ENCODE measurements at regions of chr14 and their contacts with region 1.

Region 1: DNA sequence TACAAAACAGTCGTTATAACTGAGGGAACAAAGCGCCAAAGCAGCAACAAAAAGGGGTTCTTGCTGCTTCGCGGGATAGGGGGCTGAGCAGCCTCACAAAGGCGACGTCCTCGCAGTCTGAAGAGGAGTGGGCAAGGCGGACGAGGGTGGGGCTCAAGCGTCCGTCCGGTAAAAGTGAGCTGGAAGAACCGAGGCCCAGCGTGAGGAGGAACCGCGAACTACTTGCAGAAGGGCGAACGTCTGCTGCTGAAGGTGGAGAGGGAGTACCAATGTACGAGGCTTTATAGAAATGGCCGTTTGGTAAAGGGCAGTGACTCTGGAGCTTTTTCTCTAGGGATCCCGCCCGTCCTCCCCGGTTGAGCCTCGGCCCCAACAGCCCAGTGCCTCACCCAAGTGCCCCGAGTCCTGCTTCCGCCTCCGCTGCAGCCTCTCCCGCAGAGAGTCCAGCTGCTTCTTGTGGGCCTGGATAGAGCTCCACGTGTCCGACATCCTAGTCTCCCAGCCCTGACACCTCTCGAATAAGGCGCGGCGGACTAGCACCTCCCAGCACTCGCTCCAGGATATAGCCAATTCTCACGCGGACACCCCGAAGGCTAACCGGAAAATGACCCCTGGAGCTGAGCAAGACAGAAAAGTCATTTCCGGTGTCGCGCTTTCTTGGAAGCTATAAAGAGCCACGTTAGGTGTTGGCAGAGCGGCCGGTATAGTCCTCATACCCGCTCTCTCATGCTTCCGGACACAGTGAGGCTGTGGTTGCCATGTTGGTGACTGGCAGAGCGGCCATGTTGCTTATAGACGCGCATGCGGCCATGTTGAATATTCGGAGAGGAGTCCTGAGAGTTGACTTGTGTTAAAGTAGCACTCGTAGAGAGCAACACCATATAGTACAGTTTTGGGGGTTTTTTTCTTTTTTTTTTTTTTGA is at the start of gene METTL3:
- DNase-seq: peak; percentile 97
- H3K4me3 ChIP-seq: peak within 1 kb of the TSS; percentile 99
- H3K27ac ChIP-seq: peak within 1 kb of the TSS; percentile 86
- H3K27me3 ChIP-seq: no peaks in the 10 kb centered on the region
- CTCF ChIP-seq: no peak
- polyA plus RNA-seq, gene METTL3: 62.3 and 66.3 TPM in 2 replicates

Region 2: DNA sequence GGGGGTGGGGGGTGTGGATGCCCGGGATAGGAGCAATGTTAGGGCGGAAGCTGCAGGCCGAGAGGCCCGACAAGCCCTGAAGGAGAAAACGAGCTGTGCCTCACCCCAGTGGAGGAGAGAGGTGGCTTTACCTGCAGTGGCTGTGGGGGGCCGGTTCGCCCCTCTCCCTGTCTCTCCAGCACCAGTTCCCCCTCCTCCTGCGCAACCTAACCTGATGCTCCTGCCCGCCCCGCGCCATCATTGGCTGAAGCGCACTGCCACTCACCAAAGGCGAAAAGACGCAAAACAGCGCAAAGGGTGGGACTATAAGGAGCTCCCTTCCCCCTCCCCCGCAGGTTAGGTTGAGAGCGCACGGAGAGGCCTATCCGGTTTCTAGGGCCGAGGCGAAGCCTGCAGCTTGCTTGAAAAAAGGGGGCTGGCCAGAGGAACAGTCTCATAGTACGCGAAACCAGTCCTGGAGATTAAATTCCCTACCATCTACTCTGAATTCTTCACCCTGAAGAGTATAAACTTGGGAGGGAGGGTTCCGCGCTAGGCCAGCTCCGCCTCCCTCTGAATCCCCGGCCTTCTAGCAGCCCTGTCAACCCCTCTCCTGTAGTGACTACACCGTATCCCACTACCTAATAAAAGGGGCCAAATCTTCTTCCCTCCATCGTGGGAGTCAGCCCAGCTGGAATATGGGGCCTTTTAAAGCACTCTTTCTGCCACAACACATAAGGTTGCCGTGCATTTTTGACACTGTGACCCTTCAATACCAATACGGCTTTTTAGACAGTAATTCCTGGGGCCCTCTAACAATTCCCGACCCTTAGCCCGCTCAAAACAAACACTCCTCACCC is 73.7 kb before region 1 on chr14:
- CTCF ChIA-PET with region 1: no interaction called
- POLR2A ChIA-PET with region 1: interaction called, 10 read pairs
- DNase-seq: peak; percentile 99
- H3K4me3 ChIP-seq: peak overlapping the region; percentile 93
- H3K27ac ChIP-seq: peak overlapping the region; percentile 88
- H3K27me3 ChIP-seq: no peaks in the 10 kb centered on the region
- CTCF ChIP-seq: no peak

Region 3: GRCh38 chr14:21525962-21526671 is 15.1 kb after region 1 on chr14 and contains the start of gene SALL2:
- CTCF ChIA-PET with region 1: interaction called, 5 read pairs
- POLR2A ChIA-PET with region 1: interaction called, 23 read pairs
- DNase-seq: peak; percentile 27
- H3K4me3 ChIP-seq: peak within 1 kb of the TSS; percentile 76
- H3K27ac ChIP-seq: no peak within 1 kb of the TSS
- H3K27me3 ChIP-seq: peaks cover 12% of the 10 kb centered on the region
- CTCF ChIP-seq: no peak
- polyA plus RNA-seq, gene SALL2: 15.0 and 17.1 TPM in 2 replicates

Region 4: GRCh38 chr14:21557084-21557901 is 46.3 kb after region 1 on chr14:
- CTCF ChIA-PET with region 1: interaction called, 18 read pairs
- POLR2A ChIA-PET with region 1: no interaction called
- DNase-seq: peak; percentile 76
- H3K4me3 ChIP-seq: peak overlapping the region; percentile 49
- H3K27ac ChIP-seq: no peak overlapping the region
- H3K27me3 ChIP-seq: no peaks in the 10 kb centered on the region
- CTCF ChIP-seq: peak; percentile 70

Region 5: DNA sequence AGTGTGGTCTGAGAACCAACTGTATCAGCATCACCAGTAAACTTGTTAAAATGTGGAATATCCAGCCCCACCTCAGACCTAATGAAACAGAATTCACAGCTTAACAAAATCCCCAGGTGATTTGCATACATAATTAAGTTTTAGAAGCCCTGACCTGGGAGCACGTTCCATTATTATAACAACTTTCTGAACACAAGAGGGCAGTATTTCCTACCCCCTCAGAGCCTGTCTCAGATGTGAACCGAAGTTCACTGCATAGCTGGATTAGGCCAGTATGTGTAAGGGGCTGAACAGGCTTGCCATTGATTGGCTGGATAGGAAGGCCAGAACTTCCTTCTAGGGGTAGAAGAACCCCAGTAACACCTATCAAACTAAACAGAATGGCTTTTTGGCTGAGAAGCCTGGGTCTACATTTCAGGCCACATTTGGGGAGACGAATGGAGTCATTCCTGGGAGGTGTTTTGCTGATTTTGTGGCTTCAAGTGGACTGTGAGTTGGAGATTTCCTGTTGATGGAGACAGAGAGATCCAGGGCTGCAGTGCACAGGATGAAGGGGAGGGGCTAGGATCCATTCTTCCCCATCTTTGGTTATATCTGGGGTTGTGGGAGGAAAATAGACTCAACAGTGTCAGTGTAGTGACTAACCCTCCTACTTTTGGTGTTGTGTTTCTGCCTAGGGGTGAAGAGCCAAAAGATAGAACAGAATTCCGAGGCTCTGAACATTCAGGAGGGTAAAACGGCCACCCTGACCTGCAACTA is 257.3 kb after region 1 on chr14:
- CTCF ChIA-PET with region 1: no interaction called
- POLR2A ChIA-PET with region 1: no interaction called
- DNase-seq: no peak
- H3K4me3 ChIP-seq: no peak overlapping the region
- H3K27ac ChIP-seq: no peak overlapping the region
- H3K27me3 ChIP-seq: no peaks in the 10 kb centered on the region
- CTCF ChIP-seq: peak; percentile 39